Heart left ventricle (tissue), 16 donors: ENCODE measurements at regions of chr19 and their contacts with region 1.

Region 1: DNA sequence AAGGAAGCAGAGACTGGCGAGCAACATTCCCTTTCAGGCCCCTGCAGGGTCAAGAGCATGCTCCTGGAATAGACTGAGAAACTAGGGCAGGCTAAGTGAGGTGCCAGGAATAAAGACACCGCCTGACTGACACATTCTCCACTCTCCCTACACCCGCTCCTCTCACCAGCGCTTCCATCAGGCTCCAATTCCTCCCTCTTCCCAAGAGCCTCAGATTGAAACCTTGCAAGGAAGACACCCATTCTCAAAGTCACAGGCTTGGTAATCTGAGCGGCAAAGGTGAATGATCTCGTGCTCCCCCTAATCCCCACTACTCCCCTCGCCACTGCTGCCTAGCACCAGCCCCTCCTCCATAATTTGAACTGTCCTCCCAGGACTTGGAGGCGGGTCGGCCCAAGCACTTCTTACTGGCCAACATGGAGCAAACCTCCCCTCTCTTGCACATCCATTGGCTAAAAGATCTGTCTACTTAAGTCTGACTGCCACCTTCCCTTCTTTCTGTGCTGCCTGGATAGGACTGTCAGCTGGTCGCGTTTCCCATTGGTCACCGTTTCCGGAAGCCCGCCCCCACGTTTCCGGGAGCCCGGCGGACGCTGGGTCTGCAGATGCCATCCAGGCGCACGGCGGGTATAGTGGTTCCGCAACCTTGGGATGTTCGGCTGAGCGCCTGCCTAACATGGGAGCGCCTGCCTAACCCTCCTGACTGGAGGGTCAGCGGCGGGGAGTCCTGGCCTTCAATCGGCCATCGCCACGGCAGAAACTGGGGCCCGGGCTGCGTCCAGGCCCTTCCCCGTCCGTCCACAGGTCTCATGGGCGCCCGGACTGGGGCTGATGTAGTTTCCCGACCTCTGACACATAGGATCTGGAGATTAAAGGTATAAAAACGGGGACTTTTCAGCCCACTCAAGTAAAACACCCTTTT is 33.6 kb downstream of the ZNF383 start:
- DNase-seq: peak; percentile 89 to 92 (median 91)
- ATAC-seq: peak; percentile 99 to 100 (median 99)
- H3K4me3 ChIP-seq: peak overlapping the region; percentile 44 to 98 (median 72)
- H3K27ac ChIP-seq: peak overlapping the region in 11 of 12 donors; percentile 71 to 91 (median 81)
- H3K4me1 ChIP-seq: peaks cover 0 to 18% (median 0%) of the 10 kb centered on the region in 12 donors
- H3K27me3 ChIP-seq: no peaks in the 10 kb centered on the region
- CTCF ChIP-seq: no peak
- POLR2A ChIP-seq: peak in 1 of 2 donors; percentile 28

Region 2: GRCh38 chr19:37172368-37173366 is 78.9 kb before region 1 on chr19 and contains the start of gene ZNF585A:
- intact Hi-C with region 1: loop called in 1 of 10 experiments (anchors 10 kb)
- DNase-seq: peak; percentile 93 to 95 (median 93)
- ATAC-seq: peak; percentile 100
- H3K4me3 ChIP-seq: peak within 1 kb of the TSS; percentile 49 to 81 (median 68)
- H3K27ac ChIP-seq: peak within 1 kb of the TSS in 11 of 12 donors; percentile 6 to 82 (median 67)
- H3K4me1 ChIP-seq: peaks cover 0 to 14% (median 7%) of the 10 kb centered on the region in 12 donors
- H3K27me3 ChIP-seq: no peaks in the 10 kb centered on the region
- CTCF ChIP-seq: peak in 7 of 12 donors; percentile 21 to 59 (median 34)
- POLR2A ChIP-seq: peak in 1 of 2 donors; percentile 32
- total RNA-seq, gene ZNF585A: 6.5 to 14.8 (median 11.3) TPM

Region 3: DNA sequence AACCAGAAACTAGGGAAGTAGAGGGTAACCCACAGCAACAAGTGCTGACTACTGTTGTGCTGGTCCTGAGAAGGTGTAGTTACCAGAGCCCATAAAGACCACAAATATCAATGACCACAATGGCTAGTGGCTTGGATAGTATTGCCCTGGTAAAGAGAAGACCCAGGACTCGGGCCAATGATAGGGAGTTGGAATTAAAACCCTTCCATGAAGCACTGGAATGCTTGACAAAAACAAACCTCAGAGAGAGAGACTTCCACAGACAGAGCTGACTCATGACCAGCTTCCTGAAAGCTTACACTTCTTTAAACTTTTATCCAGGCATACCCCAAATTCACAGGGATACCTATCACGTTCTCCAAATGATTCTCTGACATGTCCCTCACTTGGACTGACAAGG is 594.4 kb after region 1 on chr19:
- intact Hi-C with region 1: no loop called
- DNase-seq: no peak
- ATAC-seq: no peak
- H3K4me3 ChIP-seq: no peak overlapping the region
- H3K27ac ChIP-seq: no peak overlapping the region
- H3K4me1 ChIP-seq: no peaks in the 10 kb centered on the region
- H3K27me3 ChIP-seq: peaks cover 0 to 3% (median 0%) of the 10 kb centered on the region in 9 donors
- CTCF ChIP-seq: no peak
- POLR2A ChIP-seq: no peak